GM10248 (cell line): ENCODE measurements at regions of chr11 and their contacts with region 1.

Region 1: DNA sequence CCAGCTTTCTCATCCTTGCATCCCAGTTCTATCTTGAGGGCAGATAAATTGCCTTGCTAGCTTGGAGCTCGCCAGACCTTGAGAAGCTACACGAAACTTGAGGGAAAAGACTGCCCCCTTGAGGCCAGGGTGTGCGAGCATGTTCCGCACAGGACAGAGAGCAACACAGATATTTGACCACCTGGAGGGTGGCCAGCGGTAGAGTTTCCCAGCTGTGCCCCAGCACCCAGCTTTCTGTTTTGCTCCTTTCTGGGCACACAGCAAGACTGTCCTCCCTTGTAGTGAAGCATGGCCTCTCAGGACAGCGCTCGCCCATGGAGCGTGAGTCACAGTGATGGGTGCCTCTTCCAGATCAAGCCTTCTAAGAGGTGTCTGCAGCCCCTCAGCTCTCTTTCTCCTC is 23.5 kb downstream of the SPATA19 start:
- DNase-seq: peak; percentile 68
- CTCF ChIP-seq: peak; percentile 71

Region 2: GRCh38 chr11:133809569-133810491 is 11.9 kb before region 1 on chr11:
- CTCF ChIA-PET with region 1: interaction called, 10 read pairs
- POLR2A ChIA-PET with region 1: no interaction called
- DNase-seq: no peak
- CTCF ChIP-seq: no peak